Activated B cell treated with CpG ODN at 0.5 μM for 24 hours (primary cell): ENCODE measurements at regions of chr5 and their contacts with region 1.

Region 1: DNA sequence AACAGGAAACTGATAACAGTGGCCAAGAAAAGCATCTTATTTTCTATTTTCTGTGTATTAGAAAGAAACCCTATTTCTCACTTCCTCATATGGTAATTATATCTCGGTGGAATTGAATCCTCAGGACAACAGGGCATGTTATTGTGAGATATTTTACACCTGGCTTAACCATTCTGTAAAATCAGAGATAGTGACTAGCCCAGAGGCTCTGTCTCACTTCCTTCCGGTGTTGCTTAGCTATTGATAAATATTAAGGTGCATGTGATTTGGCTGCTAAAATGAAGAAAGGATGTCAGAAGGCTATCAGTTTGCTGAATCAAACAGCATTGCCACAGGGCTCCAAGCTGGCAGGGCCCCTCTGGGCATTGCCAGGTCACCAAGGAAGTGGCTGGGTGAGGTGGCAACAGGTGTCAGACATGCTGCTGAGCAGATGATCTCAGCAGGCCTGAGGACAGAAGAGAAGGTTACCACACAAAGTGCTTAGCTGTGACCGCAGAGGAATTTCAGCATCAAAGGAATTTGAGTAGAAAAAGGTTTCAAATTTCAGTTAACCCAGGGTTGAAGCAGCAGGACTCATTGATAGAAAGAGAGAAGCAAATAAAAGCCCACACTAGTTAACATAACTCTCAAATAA is 330.7 kb downstream of the PDE4D start:
- DNase-seq: peak; percentile 60
- ATAC-seq: peak; percentile 91
- H3K4me3 Mint-ChIP-seq: peak overlapping the region; percentile 65
- H3K27ac Mint-ChIP-seq: peak overlapping the region; percentile 91
- H3K4me1 Mint-ChIP-seq: peaks cover 81% of the 10 kb centered on the region
- H3K27me3 Mint-ChIP-seq: no peaks in the 10 kb centered on the region
- CTCF ChIP-seq: no peak

Region 2: GRCh38 chr5:58505971-58506640 is 1056.8 kb before region 1 on chr5:
- CTCF ChIA-PET with region 1: no interaction called
- POLR2A ChIA-PET with region 1: no interaction called
- intact Hi-C with region 1: loop called (anchors 10 kb)
- DNase-seq: no peak
- ATAC-seq: peak; percentile 87
- H3K4me3 Mint-ChIP-seq: peak overlapping the region; percentile 62
- H3K27ac Mint-ChIP-seq: peak overlapping the region; percentile 78
- H3K4me1 Mint-ChIP-seq: peaks cover 80% of the 10 kb centered on the region
- H3K27me3 Mint-ChIP-seq: no peaks in the 10 kb centered on the region
- CTCF ChIP-seq: no peak

Region 3: GRCh38 chr5:58786711-58787303 is 776.1 kb before region 1 on chr5:
- CTCF ChIA-PET with region 1: no interaction called
- POLR2A ChIA-PET with region 1: no interaction called
- intact Hi-C with region 1: no loop called
- DNase-seq: no peak
- ATAC-seq: no peak
- H3K4me3 Mint-ChIP-seq: no peak overlapping the region
- H3K27ac Mint-ChIP-seq: no peak overlapping the region
- H3K4me1 Mint-ChIP-seq: peaks cover 8% of the 10 kb centered on the region
- H3K27me3 Mint-ChIP-seq: peaks cover 6% of the 10 kb centered on the region
- CTCF ChIP-seq: no peak

Region 4: DNA sequence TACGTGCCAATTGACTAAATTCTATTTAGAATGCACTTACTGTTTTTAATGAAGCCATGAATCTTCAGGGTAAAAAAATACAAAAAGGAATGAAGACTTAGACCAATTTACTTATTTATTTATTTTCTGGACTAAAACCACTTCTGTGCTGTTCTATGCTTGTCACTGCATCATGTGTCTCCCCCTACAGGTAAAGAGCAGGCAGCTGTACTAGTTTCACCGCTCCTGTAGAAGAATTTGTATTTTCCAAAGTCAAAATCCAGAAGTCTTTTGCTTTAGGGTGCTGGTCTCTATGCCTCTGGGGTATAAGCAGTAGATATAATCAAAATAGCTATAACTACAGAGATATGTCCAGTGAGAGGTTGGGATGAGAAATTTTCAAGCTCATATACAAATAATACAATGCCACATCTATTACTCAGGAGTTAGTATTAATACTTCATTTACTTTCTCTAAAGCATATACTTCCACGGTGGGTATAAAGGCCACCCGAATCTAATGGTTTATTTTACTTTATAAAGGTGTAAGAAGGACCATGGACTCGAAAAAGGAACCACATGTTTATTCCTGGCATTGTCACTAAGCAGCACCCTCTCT is 388.5 kb before region 1 on chr5:
- CTCF ChIA-PET with region 1: no interaction called
- POLR2A ChIA-PET with region 1: interaction called, 15 read pairs
- intact Hi-C with region 1: no loop called
- DNase-seq: no peak
- ATAC-seq: peak; percentile 50
- H3K4me3 Mint-ChIP-seq: no peak overlapping the region
- H3K27ac Mint-ChIP-seq: no peak overlapping the region
- H3K4me1 Mint-ChIP-seq: peaks cover 6% of the 10 kb centered on the region
- H3K27me3 Mint-ChIP-seq: no peaks in the 10 kb centered on the region
- CTCF ChIP-seq: no peak

Region 5: GRCh38 chr5:59591162-59591561 is 28.3 kb after region 1 on chr5:
- CTCF ChIA-PET with region 1: no interaction called
- POLR2A ChIA-PET with region 1: no interaction called
- intact Hi-C with region 1: loop called (anchors 2 kb)
- DNase-seq: no peak
- ATAC-seq: peak; percentile 90
- H3K4me3 Mint-ChIP-seq: no peak overlapping the region
- H3K27ac Mint-ChIP-seq: peak overlapping the region; percentile 46
- H3K4me1 Mint-ChIP-seq: peaks cover 28% of the 10 kb centered on the region
- H3K27me3 Mint-ChIP-seq: peaks cover 5% of the 10 kb centered on the region
- CTCF ChIP-seq: no peak

Region 6: DNA sequence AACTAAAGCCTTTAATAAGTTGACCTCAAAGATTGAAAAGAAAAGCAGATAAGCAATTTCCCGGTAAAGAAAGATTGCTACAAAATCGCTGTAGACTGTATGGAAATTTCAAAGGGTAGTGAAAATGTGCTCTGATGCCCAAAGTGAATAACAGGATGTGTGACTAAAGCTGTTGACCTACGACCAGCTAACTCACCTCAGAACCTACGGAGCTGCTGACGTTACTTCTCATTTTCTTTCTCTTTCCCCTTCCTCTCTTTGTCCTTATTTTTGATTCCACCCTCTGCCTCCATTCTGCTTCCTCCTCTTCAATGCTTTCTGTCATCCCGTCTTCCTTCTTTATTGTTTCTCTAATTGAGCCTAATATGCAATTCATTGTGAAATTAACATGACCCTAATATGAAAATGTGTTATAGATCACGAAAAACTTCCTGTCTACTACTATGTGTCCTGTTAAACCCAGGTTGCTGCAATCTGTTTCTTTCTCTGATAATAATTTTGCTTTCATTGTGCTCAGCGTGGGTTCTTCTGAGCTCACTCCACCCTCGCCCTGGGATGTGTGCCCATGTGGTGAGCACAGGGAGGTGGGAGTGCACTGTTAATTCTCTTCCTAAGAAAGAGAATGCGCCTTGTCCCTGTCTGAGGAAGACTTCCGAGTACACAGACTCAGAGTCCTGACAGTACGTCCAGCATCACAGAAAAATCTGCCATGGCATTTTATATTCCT is 227.7 kb after region 1 on chr5:
- CTCF ChIA-PET with region 1: no interaction called
- POLR2A ChIA-PET with region 1: no interaction called
- intact Hi-C with region 1: loop called (anchors 2 kb)
- DNase-seq: no peak
- ATAC-seq: peak; percentile 90
- H3K4me3 Mint-ChIP-seq: peak overlapping the region; percentile 74
- H3K27ac Mint-ChIP-seq: peak overlapping the region; percentile 96
- H3K4me1 Mint-ChIP-seq: peaks cover 66% of the 10 kb centered on the region
- H3K27me3 Mint-ChIP-seq: no peaks in the 10 kb centered on the region
- CTCF ChIP-seq: no peak

Region 7: DNA sequence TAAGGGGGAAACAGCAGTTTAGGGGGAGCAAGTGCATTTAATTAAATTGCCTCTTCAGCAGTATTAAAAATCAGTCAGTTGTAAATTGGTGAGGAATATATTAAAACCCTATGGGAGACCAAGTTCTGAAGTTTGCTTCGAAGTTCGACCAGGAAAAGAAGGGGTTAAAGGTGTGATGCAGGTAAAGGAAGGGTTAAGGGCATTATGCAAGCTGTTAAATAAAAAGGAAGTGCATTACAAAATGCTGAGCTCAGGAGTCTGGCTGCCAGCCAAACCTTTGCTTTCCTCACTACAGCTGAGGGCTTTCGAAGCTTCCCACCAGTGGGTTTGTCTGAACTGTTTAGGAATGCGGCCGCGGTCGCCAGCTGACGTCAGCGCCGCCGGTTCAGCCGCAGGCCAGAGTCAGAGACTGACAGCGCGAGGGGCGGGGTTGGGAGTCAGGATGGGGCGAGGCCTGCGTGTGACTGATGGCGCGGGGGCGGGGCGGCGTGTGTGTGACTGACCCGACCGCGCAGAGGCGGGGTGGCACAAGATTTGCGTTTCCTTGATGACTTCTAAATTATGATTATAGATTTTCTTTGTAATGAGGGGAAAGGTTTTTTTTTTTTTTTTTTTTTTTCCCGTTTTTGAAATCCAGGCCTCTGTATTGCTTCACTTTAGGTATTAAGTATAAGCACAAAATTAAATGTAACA is 1845.7 kb after region 1 on chr5:
- CTCF ChIA-PET with region 1: no interaction called
- POLR2A ChIA-PET with region 1: no interaction called
- intact Hi-C with region 1: loop called (anchors 5 kb)
- DNase-seq: peak; percentile 94
- ATAC-seq: peak; percentile 99
- H3K4me3 Mint-ChIP-seq: peak overlapping the region; percentile 70
- H3K27ac Mint-ChIP-seq: peak overlapping the region; percentile 85
- H3K4me1 Mint-ChIP-seq: peaks cover 29% of the 10 kb centered on the region
- H3K27me3 Mint-ChIP-seq: no peaks in the 10 kb centered on the region
- CTCF ChIP-seq: no peak